ENCODE measurements at regions of chr1 and their contacts with region 1.

Region 1: DNA sequence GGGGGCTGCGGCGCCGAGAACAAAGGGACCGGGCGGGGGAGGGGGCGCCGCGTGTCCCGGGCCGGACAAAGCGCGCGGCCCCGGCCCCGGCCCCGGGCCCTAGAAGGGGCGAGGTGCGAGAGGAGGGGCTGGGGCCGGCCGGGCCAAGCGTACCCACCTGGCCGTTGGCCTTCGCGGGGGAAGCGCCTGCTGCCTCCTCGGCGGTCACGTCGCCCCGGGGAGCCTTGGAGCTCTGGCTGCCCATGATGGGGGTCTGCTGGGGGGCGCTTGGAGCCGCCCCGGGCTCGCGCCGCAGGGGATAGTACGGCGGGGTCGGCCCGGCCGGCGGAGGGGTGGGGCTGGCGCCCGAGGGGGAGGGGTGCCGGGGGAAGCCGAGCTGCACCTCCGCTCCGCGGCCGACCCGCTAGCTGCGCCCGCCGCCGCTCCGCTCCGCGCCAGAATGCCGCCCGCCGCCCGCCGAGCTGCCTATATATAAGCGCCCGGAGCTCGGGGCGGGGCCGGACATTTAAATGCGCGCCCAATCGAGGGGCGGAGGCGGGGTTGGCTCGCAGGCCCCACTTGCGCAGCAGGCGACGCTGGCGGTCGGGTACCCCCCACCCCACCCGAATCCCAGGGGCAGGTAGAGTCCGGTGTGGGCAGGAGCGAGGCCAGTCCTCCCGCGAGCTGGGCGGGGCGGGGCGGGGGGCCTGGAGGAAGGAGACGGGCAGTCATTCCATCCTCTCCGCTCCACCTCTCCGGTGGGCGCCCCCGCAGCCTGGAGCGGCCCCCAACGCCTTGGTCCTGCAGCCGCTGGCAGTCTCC is at the start of gene MARCKSL1:
- DNase-seq: peak; percentile 81
- H3K4me3 Mint-ChIP-seq: peak within 1 kb of the TSS; percentile 77
- H3K27ac Mint-ChIP-seq: peak within 1 kb of the TSS; percentile 43
- H3K4me1 Mint-ChIP-seq: peaks cover 48% of the 10 kb centered on the region
- H3K27me3 Mint-ChIP-seq: no peaks in the 10 kb centered on the region
- total RNA-seq, gene MARCKSL1: 13.1 to 14.6 TPM

Region 2: DNA sequence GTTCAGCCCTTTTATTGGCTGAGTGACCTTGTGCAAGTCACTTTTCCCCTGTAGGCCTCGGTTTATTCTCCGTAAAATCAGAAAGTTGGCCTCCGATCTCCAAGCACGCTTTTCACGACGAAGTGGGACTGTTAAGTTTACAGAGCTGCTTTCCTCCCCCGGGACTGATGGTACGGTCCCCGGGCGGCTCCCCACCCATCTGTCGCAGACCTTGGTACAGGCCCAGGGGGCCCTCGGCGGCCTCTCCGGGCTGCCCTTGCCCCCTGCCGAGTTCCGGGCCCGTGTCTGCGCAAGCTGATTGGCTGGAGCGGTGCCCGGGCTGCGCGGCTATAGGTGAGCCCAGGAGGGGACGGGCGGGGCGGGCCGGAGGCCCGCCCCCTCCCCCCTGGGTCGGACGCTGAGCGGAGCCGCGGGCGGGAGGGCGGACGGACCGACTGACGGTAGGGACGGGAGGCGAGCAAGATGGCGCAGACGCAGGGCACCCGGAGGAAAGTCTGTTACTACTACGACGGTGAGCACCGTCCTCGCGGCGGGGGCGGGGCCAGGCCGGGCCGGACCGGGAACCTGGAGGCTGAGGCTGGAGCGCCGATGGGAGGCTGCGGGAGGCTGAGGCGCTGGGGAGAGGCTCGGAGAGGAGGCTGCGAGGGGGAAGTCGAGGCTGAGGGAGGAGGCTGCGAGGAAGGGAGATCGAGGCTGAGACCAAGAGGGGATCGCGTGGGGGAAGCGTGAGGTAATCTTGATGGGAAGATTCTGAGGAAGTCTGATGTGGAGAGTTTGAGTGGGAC is 44.1 kb before region 1 on chr1 and contains the start of gene HDAC1:
- CTCF ChIA-PET with region 1: no interaction called
- POLR2A ChIA-PET with region 1: interaction called, 9 read pairs
- intact Hi-C with region 1: loop called (anchors 5 kb)
- DNase-seq: peak; percentile 98
- H3K4me3 Mint-ChIP-seq: peak within 1 kb of the TSS; percentile 100
- H3K27ac Mint-ChIP-seq: peak within 1 kb of the TSS; percentile 93
- H3K4me1 Mint-ChIP-seq: peaks cover 46% of the 10 kb centered on the region
- H3K27me3 Mint-ChIP-seq: no peaks in the 10 kb centered on the region
- total RNA-seq, gene HDAC1: 136 to 139 TPM

Region 3: GRCh38 chr1:32351399-32352238 is 15.6 kb after region 1 on chr1:
- CTCF ChIA-PET with region 1: interaction called, 6 read pairs
- POLR2A ChIA-PET with region 1: interaction called, 9 read pairs
- intact Hi-C with region 1: loop called (anchors 1 kb)
- DNase-seq: peak; percentile 95
- H3K4me3 Mint-ChIP-seq: peak overlapping the region; percentile 79
- H3K27ac Mint-ChIP-seq: peak overlapping the region; percentile 81
- H3K4me1 Mint-ChIP-seq: peaks cover 34% of the 10 kb centered on the region
- H3K27me3 Mint-ChIP-seq: no peaks in the 10 kb centered on the region

Region 4: DNA sequence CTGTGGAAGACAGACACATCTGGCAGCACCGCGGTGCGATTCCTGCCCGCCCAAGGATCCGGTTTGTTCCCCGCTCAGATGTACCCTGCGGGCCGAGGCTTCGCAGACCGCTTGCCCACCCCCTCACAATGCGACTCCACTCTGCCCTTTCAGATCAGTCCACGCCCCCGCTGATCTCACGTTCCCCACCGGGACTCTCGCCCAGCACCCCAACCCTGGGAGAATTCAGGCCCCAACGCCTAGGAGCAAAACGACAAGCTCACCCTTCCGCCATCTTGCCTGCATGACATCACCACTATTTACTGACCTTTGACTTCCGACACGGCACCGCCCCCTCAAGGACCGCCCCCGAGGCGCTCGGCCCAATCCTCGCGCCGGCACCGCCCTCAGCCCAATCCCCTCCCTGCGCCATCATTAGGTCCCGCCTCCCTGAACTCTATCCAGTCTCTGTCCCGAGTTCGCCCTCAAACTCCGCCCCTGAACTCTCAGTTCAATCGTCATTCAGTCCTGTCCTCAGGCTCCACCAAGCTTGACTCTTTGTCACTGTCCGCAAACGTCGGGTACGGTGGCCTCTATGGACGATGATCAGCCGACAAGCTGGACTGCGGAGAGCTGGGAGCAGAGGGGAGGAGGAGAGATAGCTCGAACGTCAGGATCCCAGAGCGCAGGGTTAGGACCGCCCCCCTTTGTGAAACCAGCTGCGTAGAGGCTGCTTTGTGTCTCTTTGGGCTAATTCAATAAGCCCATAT is 58.3 kb after region 1 on chr1 and contains the start of gene BSDC1:
- CTCF ChIA-PET with region 1: interaction called, 8 read pairs
- POLR2A ChIA-PET with region 1: interaction called, 11 read pairs
- intact Hi-C with region 1: loop called (anchors 2 kb)
- DNase-seq: peak; percentile 99
- H3K4me3 Mint-ChIP-seq: peak within 1 kb of the TSS; percentile 94
- H3K27ac Mint-ChIP-seq: peak within 1 kb of the TSS; percentile 90
- H3K4me1 Mint-ChIP-seq: peaks cover 22% of the 10 kb centered on the region
- H3K27me3 Mint-ChIP-seq: no peaks in the 10 kb centered on the region
- total RNA-seq, gene BSDC1: 32.1 to 33.2 TPM

Region 5: GRCh38 chr1:32438136-32438535 is 102.1 kb after region 1 on chr1:
- CTCF ChIA-PET with region 1: no interaction called
- POLR2A ChIA-PET with region 1: no interaction called
- intact Hi-C with region 1: no loop called
- DNase-seq: no peak
- H3K4me3 Mint-ChIP-seq: no peak overlapping the region
- H3K27ac Mint-ChIP-seq: no peak overlapping the region
- H3K4me1 Mint-ChIP-seq: no peaks in the 10 kb centered on the region
- H3K27me3 Mint-ChIP-seq: peaks cover 24% of the 10 kb centered on the region

Region 6: DNA sequence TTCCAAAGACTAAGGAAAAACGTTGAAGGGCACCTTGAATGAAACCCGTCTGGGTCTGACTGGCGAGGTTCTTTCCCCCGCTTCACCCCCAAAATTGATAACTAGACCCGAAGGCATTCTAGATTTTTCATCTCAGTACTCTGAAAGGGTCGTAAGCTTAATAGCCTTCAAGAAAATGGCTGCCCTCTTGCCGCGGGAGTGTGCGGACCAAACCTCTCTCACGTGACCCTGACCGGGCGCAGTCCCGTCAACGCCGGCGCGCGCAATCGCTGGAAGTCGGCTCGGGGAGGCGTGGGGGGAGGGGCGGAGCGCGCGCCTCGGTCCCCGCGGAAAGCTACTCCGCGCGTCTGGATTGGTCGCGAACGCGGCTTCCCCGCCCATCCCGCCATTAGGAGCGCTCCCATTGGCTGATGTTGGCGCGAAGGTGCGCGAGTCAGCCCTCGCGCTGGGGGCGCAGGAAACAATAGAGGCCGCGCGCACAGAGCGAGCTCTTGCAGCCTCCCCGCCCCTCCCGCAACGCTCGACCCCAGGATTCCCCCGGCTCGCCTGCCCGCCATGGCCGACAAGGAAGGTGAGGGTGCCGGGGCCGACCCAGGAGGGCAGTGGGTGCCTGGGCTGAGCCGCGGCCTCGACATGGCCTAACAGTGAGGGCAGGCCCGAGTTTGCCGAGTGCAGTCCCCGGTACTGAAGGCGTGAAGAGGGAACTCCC is 314.9 kb after region 1 on chr1 and contains the start of gene RBBP4:
- CTCF ChIA-PET with region 1: no interaction called
- POLR2A ChIA-PET with region 1: interaction called, 3 read pairs
- intact Hi-C with region 1: loop called (anchors 5 kb)
- DNase-seq: peak; percentile 99
- H3K4me3 Mint-ChIP-seq: peak within 1 kb of the TSS; percentile 99
- H3K27ac Mint-ChIP-seq: peak within 1 kb of the TSS; percentile 100
- H3K4me1 Mint-ChIP-seq: peaks cover 49% of the 10 kb centered on the region
- H3K27me3 Mint-ChIP-seq: no peaks in the 10 kb centered on the region
- total RNA-seq, gene RBBP4: 325 to 334 TPM

Measured in activated CD4-positive, alpha-beta memory T cell treated with anti-CD3 and anti-CD28 coated beads for 36 hours (primary cell).